GM12878 (cell line): ENCODE measurements at regions of chr5 and their contacts with region 1.

Region 1: GRCh38 chr5:136375920-136376319 is 10.6 kb upstream of the TRPC7 start:
- DNase-seq: no peak
- ATAC-seq: no peak
- H3K4me3 ChIP-seq: no peak overlapping the region
- H3K27ac ChIP-seq: no peak overlapping the region
- H3K4me1 ChIP-seq: no peaks in the 10 kb centered on the region
- H3K27me3 ChIP-seq: no peaks in the 10 kb centered on the region
- CTCF ChIP-seq: no peak
- EP300 ChIP-seq: no peak
- POLR2A ChIP-seq: no peak
- RAD21 ChIP-seq: no peak

Region 2: DNA sequence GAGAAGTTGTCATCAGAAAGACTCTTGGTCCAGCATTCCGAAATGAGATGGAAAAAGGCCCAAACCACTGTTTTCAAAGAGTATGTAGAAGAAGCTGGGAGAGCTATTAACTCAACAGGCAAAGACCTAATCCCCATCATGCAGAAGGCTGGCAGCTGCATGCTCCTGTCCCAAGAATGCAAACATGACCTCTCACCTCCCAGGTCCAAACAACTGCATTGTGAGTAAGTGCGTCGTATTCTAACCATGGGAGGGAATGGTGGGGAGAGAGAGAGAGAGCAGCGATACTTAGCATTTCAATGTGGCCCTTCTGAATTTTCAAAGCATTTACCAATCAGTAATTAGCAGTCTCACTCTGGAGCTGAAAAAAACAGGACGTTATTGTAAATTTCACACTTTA is 38.1 kb before region 1 on chr5:
- CTCF ChIA-PET with region 1: no interaction called
- POLR2A ChIA-PET with region 1: no interaction called
- RAD21 ChIA-PET with region 1: no interaction called
- SMC1A ChIA-PET with region 1: no interaction called
- in situ Hi-C with region 1: no loop called
- intact Hi-C with region 1: no loop called
- DNase-seq: no peak
- ATAC-seq: no peak
- H3K4me3 ChIP-seq: no peak overlapping the region
- H3K27ac ChIP-seq: no peak overlapping the region
- H3K4me1 ChIP-seq: no peaks in the 10 kb centered on the region
- H3K27me3 ChIP-seq: no peaks in the 10 kb centered on the region; a peak in 1 of 4 replicates
- CTCF ChIP-seq: no peak
- EP300 ChIP-seq: no peak
- POLR2A ChIP-seq: no peak
- RAD21 ChIP-seq: no peak

Region 3: GRCh38 chr5:136686192-136686872 is 310.4 kb after region 1 on chr5:
- CTCF ChIA-PET with region 1: no interaction called
- POLR2A ChIA-PET with region 1: no interaction called
- RAD21 ChIA-PET with region 1: no interaction called
- SMC1A ChIA-PET with region 1: no interaction called
- in situ Hi-C with region 1: no loop called
- intact Hi-C with region 1: loop called (anchors 5 kb)
- DNase-seq: no peak
- ATAC-seq: peak; percentile 70
- H3K4me3 ChIP-seq: no peak overlapping the region
- H3K27ac ChIP-seq: no peak overlapping the region
- H3K4me1 ChIP-seq: no peaks in the 10 kb centered on the region
- H3K27me3 ChIP-seq: no peaks in the 10 kb centered on the region
- CTCF ChIP-seq: peak; percentile 19 to 41 (median 36); a peak in 4 of 6 replicates
- EP300 ChIP-seq: no peak
- POLR2A ChIP-seq: no peak
- RAD21 ChIP-seq: peak; percentile 43